ENCODE measurements at regions of chr17 and their contacts with region 1.

Region 1: GRCh38 chr17:47978324-47978723 is 7.4 kb downstream of the CDK5RAP3 start:
- DNase-seq: peak; percentile 37
- H3K4me3 ChIP-seq: no peak overlapping the region
- H3K27ac ChIP-seq: no peak overlapping the region
- H3K4me1 ChIP-seq: peaks cover 5% of the 10 kb centered on the region
- H3K27me3 ChIP-seq: no peaks in the 10 kb centered on the region
- CTCF ChIP-seq: peak; percentile 19 to 74 (median 64)
- POLR2A ChIP-seq: no peak

Region 2: GRCh38 chr17:48016112-48016511 is 37.8 kb after region 1 on chr17:
- intact Hi-C with region 1: loop called (anchors 5 kb)
- DNase-seq: no peak
- H3K4me3 ChIP-seq: no peak overlapping the region
- H3K27ac ChIP-seq: no peak overlapping the region
- H3K4me1 ChIP-seq: peaks cover 5% of the 10 kb centered on the region
- H3K27me3 ChIP-seq: no peaks in the 10 kb centered on the region
- CTCF ChIP-seq: no peak
- POLR2A ChIP-seq: no peak

Region 3: GRCh38 chr17:48283411-48283810 is 305.1 kb after region 1 on chr17:
- intact Hi-C with region 1: no loop called
- DNase-seq: no peak
- H3K4me3 ChIP-seq: no peak overlapping the region
- H3K27ac ChIP-seq: no peak overlapping the region
- H3K4me1 ChIP-seq: peaks cover 7% of the 10 kb centered on the region
- H3K27me3 ChIP-seq: no peaks in the 10 kb centered on the region
- CTCF ChIP-seq: no peak
- POLR2A ChIP-seq: no peak